Gastrocnemius medialis (tissue), 4 donors: ENCODE measurements at regions of chrX and their contacts with region 1.

Region 1: GRCh38 chrX:57651169-57651919 is 28.7 kb downstream of the NLRP2B start:
- DNase-seq: no peak
- ATAC-seq: no peak
- H3K4me3 ChIP-seq: no peak overlapping the region
- H3K27ac ChIP-seq: no peak overlapping the region
- H3K4me1 ChIP-seq: no peaks in the 10 kb centered on the region
- H3K27me3 ChIP-seq: no peaks in the 10 kb centered on the region
- CTCF ChIP-seq: no peak
- POLR2A ChIP-seq: no peak

Region 2: DNA sequence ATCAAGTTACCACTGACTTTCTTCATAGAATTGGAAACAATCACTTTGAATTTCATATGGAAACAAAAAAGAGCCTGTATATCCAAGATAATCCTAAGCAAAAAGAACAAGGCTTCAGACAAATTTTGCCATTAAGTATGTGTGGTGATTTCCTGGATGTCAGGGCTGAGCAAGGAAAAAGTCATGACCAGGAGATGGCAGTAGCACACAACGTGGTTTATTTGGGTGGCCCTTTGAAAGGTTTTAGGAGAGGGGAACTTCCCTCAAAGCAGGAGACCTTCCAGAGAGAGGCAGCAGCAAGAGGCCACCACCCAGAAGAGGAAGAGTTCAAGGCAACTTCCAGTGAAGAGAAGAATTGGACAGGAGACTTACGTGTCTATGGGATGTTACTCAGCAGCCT is 77.6 kb before region 1 on chrX:
- in situ Hi-C with region 1: loop called in 1 of 4 experiments (anchors 25 kb)
- intact Hi-C with region 1: no loop called
- DNase-seq: no peak
- ATAC-seq: no peak
- H3K4me3 ChIP-seq: no peak overlapping the region
- H3K27ac ChIP-seq: no peak overlapping the region
- H3K4me1 ChIP-seq: no peaks in the 10 kb centered on the region
- H3K27me3 ChIP-seq: no peaks in the 10 kb centered on the region
- CTCF ChIP-seq: no peak
- POLR2A ChIP-seq: no peak